ENCODE measurements at regions of chr7 and their contacts with region 1.

Region 1: DNA sequence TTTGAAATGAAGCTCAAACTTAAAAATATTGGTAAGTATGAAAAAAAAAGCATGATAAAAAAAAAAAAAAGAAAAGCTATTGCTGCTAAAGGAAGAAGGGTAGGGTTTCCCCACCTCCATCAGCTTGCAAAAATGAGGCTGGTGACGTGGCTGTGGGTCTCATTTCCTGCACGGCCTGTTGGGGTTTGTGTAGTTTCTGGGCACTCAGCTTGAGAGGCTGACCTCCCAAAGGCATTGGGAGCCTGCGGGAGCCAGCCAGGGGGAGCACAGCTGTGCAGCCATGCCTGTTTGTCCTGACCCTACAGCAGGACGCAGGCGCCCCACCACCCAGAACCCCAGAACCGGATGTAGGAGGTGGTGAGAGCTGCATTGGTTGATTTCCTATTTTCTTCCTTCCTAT is 48.8 kb upstream of the CARD11 start:
- DNase-seq: peak; percentile 90
- ATAC-seq: peak; percentile 75
- H3K4me3 Mint-ChIP-seq: peak overlapping the region; percentile 57
- H3K27ac Mint-ChIP-seq: peak overlapping the region; percentile 98
- H3K4me1 Mint-ChIP-seq: peaks cover 79% of the 10 kb centered on the region
- H3K27me3 Mint-ChIP-seq: no peaks in the 10 kb centered on the region

Region 2: GRCh38 chr7:3073763-3074458 is 18.6 kb before region 1 on chr7:
- CTCF ChIA-PET with region 1: interaction called, 169 read pairs
- POLR2A ChIA-PET with region 1: interaction called, 10 read pairs
- DNase-seq: no peak
- ATAC-seq: peak; percentile 14
- H3K4me3 Mint-ChIP-seq: no peak overlapping the region
- H3K27ac Mint-ChIP-seq: no peak overlapping the region
- H3K4me1 Mint-ChIP-seq: peaks cover 35% of the 10 kb centered on the region
- H3K27me3 Mint-ChIP-seq: no peaks in the 10 kb centered on the region

Region 3: GRCh38 chr7:3103614-3104398 is 11.3 kb after region 1 on chr7:
- CTCF ChIA-PET with region 1: interaction called, 38 read pairs
- POLR2A ChIA-PET with region 1: interaction called, 14 read pairs
- DNase-seq: peak; percentile 48
- ATAC-seq: peak; percentile 6
- H3K4me3 Mint-ChIP-seq: no peak overlapping the region
- H3K27ac Mint-ChIP-seq: peak overlapping the region; percentile 91
- H3K4me1 Mint-ChIP-seq: peaks cover 81% of the 10 kb centered on the region
- H3K27me3 Mint-ChIP-seq: no peaks in the 10 kb centered on the region

Region 4: DNA sequence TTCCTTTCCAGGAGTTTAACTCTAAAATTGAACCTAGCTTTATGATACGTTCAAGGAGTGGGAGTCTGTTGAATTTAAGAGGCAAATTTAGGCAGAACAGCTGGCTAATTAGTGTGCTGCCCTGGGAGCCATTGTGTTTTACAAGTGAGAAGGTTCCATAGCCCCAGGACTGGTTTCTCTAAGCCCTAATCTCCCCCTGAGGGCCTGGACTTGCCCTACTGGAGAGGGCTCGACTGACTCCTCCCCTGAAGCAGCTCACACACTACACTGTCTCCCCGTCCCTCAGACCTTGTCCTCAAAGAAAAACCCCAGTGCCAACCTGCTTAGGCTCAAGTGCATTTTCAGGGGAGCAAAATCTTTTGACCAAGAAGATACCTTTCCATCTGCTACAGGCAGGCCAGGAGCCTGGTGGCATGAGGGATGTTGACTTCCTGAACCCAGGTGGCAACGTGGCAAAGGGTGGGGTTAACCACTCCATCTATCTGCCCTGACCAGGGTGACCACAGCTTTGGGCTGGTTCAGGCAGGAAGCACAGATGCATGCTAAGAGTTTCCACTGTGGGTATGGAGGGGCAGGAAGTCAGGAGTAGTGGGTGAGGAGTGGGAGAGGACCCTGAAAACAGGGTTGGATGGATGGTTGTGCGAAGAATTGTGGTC is 20.1 kb after region 1 on chr7:
- CTCF ChIA-PET with region 1: interaction called, 29 read pairs
- POLR2A ChIA-PET with region 1: interaction called, 19 read pairs
- DNase-seq: peak; percentile 79
- ATAC-seq: peak; percentile 75
- H3K4me3 Mint-ChIP-seq: peak overlapping the region; percentile 32
- H3K27ac Mint-ChIP-seq: peak overlapping the region; percentile 81
- H3K4me1 Mint-ChIP-seq: peaks cover 95% of the 10 kb centered on the region
- H3K27me3 Mint-ChIP-seq: no peaks in the 10 kb centered on the region

Region 5: GRCh38 chr7:3117488-3118231 is 25.2 kb after region 1 on chr7:
- CTCF ChIA-PET with region 1: interaction called, 29 read pairs
- POLR2A ChIA-PET with region 1: interaction called, 19 read pairs
- DNase-seq: peak; percentile 69
- ATAC-seq: peak; percentile 64
- H3K4me3 Mint-ChIP-seq: peak overlapping the region; percentile 85
- H3K27ac Mint-ChIP-seq: peak overlapping the region; percentile 95
- H3K4me1 Mint-ChIP-seq: peaks cover 88% of the 10 kb centered on the region
- H3K27me3 Mint-ChIP-seq: no peaks in the 10 kb centered on the region

Measured in activated CD8-positive, alpha-beta T cell treated with anti-CD3 and anti-CD28 coated beads, Interleukin-2, amount 10 ng/mL, durations not matched to agents 7 days and 5 days (primary cell).